CD4-positive, alpha-beta T cell (primary cell): ENCODE measurements at regions of chr21 and their contacts with region 1.

Region 1: DNA sequence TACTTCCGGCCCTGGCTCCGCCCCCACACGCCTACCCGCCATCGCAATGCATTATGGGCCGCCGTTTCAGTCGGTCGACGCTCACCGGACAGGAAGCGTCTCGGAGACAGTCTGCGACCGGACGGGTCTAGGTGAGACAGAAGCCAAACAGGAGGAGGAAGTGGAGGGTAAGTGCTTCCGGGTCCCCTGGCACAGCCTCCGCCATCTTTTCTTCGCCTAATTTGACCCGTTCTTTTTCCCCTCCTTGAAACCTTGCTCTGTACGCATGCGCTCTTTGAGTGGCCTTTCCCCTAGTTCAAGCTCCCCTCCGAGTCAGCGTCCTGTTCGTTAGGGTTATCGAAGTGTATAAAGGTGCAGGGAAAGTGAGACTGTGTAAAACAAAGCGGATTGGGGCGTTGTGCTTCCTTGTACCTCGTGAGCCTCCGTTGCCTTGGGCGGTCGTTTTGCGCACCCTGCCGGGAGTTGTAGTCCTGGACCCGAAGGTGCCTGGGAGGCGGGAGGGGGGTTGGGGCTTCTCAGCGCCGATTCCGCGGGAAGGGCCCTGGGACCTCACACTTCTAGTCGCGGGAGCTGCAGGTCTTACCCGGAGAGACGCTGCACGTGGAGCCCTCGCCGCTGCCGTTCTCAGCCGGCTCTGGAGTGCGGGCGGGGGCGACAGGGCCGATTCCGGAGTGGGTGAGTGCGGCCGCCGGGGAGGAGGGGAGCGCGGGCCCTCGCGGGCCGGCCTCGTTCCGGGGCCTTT is at the starts of genes ATP5PF and GABPA:
- DNase-seq: peak; percentile 95 to 99 (median 97)
- ATAC-seq: peak; percentile 87
- H3K4me3 ChIP-seq: peak within 1 kb of the TSS; percentile 73
- H3K4me3 Mint-ChIP-seq: peak within 1 kb of the TSS; percentile 100
- H3K27ac ChIP-seq: peak within 1 kb of the TSS; percentile 90 to 93
- H3K27ac Mint-ChIP-seq: peak within 1 kb of the TSS; percentile 97
- H3K4me1 ChIP-seq: peaks cover 38% of the 10 kb centered on the region
- H3K4me1 Mint-ChIP-seq: peaks cover 70% of the 10 kb centered on the region
- H3K27me3 ChIP-seq: no peaks in the 10 kb centered on the region
- H3K27me3 Mint-ChIP-seq: no peaks in the 10 kb centered on the region
- CTCF ChIP-seq: no peak
- total RNA-seq, gene ATP5PF: 26.7 to 30.3 TPM
- total RNA-seq, gene GABPA: 23.5 to 23.6 TPM

Region 2: GRCh38 chr21:25457411-25457810 is 277.7 kb before region 1 on chr21:
- CTCF ChIA-PET with region 1: no interaction called
- POLR2A ChIA-PET with region 1: interaction called, 3 read pairs
- intact Hi-C with region 1: loop called in 1 of 2 experiments (anchors 10 kb)
- DNase-seq: peak in 3 of 14 experiments; percentile 81 to 86 (median 83)
- ATAC-seq: peak; percentile 90
- H3K4me3 ChIP-seq: peak overlapping the region; percentile 38
- H3K4me3 Mint-ChIP-seq: peak overlapping the region; percentile 76
- H3K27ac ChIP-seq: peak overlapping the region; percentile 26 to 63
- H3K27ac Mint-ChIP-seq: peak overlapping the region; percentile 73
- H3K4me1 ChIP-seq: peaks cover 11% of the 10 kb centered on the region
- H3K4me1 Mint-ChIP-seq: peaks cover 24% of the 10 kb centered on the region
- H3K27me3 ChIP-seq: no peaks in the 10 kb centered on the region
- H3K27me3 Mint-ChIP-seq: no peaks in the 10 kb centered on the region
- CTCF ChIP-seq: no peak

Region 3: DNA sequence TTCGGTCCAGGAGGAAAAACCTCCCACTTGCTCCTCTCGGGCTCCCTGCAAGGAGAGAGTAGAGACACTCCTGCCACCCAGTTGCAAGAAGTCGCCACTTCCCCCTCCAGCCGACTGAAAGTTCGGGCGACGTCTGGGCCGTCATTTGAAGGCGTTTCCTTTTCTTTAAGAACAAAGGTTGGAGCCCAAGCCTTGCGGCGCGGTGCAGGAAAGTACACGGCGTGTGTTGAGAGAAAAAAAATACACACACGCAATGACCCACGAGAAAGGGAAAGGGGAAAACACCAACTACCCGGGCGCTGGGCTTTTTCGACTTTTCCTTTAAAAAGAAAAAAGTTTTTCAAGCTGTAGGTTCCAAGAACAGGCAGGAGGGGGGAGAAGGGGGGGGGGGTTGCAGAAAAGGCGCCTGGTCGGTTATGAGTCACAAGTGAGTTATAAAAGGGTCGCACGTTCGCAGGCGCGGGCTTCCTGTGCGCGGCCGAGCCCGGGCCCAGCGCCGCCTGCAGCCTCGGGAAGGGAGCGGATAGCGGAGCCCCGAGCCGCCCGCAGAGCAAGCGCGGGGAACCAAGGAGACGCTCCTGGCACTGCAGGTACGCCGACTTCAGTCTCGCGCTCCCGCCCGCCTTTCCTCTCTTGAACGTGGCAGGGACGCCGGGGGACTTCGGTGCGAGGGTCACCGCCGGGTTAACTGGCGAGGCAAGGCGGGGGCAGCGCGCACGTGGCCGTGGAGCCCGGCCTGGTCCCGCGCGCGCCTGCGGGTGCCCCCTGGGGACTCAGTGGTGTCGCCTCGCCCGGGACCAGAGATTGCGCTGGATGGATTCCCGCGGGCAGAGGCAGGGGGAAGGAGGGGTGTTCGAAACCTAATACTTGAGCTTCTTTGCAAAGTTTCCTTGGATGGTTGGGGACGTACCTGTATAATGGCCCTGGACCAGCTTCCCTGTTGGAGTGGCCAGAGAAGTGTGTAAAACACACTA is 173.1 kb before region 1 on chr21:
- CTCF ChIA-PET with region 1: no interaction called
- POLR2A ChIA-PET with region 1: interaction called, 6 read pairs
- intact Hi-C with region 1: loop called in 1 of 2 experiments (anchors 10 kb)
- DNase-seq: peak; percentile 28 to 91 (median 47)
- ATAC-seq: peak; percentile 69
- H3K4me3 ChIP-seq: peak overlapping the region; percentile 71
- H3K4me3 Mint-ChIP-seq: peak overlapping the region; percentile 97
- H3K27ac ChIP-seq: peak overlapping the region; percentile 60 to 65
- H3K27ac Mint-ChIP-seq: peak overlapping the region; percentile 84
- H3K4me1 ChIP-seq: peaks cover 43% of the 10 kb centered on the region
- H3K4me1 Mint-ChIP-seq: peaks cover 69% of the 10 kb centered on the region
- H3K27me3 ChIP-seq: no peaks in the 10 kb centered on the region
- H3K27me3 Mint-ChIP-seq: no peaks in the 10 kb centered on the region
- CTCF ChIP-seq: no peak

Region 4: DNA sequence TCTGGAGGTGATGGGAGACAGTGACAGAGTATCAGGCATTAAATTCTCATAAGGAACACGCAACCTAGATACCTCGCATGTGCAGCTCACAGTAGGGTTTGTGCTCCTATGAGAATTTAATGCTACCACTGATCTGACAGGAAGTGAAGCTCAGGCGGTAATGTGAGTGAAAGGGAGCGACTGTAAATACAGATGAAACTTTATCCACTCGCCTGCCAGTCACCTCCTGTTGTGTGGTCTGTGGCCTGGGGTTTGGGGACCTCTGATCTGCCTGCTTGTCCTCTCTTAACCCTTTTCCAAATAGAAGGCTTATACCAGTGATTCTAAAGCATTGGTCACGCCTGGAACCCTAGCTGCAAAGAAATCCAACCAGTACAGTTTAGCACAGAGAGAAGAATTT is 15.0 kb after region 1 on chr21:
- CTCF ChIA-PET with region 1: interaction called, 3 read pairs
- POLR2A ChIA-PET with region 1: interaction called, 10 read pairs
- intact Hi-C with region 1: no loop called
- DNase-seq: peak in 1 of 14 experiments; percentile 8
- ATAC-seq: no peak
- H3K4me3 ChIP-seq: no peak overlapping the region
- H3K4me3 Mint-ChIP-seq: no peak overlapping the region
- H3K27ac ChIP-seq: no peak overlapping the region
- H3K27ac Mint-ChIP-seq: peak overlapping the region; percentile 59
- H3K4me1 ChIP-seq: no peaks in the 10 kb centered on the region
- H3K4me1 Mint-ChIP-seq: peaks cover 21% of the 10 kb centered on the region
- H3K27me3 ChIP-seq: no peaks in the 10 kb centered on the region
- H3K27me3 Mint-ChIP-seq: no peaks in the 10 kb centered on the region
- CTCF ChIP-seq: no peak

Region 5: DNA sequence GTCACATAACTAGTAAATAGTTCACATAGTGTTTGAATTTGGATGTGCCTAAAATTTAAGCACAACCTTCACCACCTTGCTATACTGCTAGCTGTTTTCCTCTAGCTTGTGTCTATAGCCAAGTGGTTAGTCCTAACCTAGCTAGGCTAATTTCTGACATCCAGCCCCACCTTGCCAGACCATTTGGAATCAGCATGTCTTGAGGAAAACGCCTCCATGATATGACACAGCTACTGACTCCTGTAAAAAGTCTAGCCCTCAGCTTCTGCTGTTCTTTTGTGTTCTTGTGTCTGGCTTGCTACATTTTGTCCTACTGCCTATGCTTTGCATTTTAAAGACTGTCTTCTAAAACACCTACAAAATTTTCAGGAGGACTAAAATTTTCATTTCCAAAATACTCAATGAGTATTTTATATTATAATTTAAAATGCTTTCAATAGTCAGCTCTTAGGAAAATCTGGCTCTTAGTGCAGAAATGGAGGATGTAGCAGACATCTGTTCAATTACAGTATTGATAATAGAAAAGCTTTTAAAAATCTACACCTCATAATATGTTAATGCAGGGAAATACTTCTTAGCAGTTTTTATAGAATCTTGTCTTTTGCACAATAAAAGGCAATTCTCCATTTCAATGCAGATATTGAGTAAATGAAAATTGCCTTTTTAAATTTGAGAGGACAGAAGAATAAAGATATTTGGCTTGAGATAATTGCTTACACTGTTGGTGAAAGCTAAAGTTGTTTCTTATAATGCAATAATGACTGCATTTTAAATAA is 596.3 kb after region 1 on chr21:
- CTCF ChIA-PET with region 1: no interaction called
- POLR2A ChIA-PET with region 1: no interaction called
- intact Hi-C with region 1: no loop called
- DNase-seq: no peak
- ATAC-seq: no peak
- H3K4me3 ChIP-seq: no peak overlapping the region
- H3K4me3 Mint-ChIP-seq: no peak overlapping the region
- H3K27ac ChIP-seq: no peak overlapping the region
- H3K27ac Mint-ChIP-seq: no peak overlapping the region
- H3K4me1 ChIP-seq: no peaks in the 10 kb centered on the region
- H3K4me1 Mint-ChIP-seq: no peaks in the 10 kb centered on the region
- H3K27me3 ChIP-seq: no peaks in the 10 kb centered on the region
- H3K27me3 Mint-ChIP-seq: peaks cover 11% of the 10 kb centered on the region
- CTCF ChIP-seq: no peak